IMR-90 (cell line): ENCODE measurements at regions of chr19 and their contacts with region 1.

Region 1: GRCh38 chr19:4267101-4267900 is 11.8 kb upstream of the SHD start:
- DNase-seq: peak; percentile 37
- ATAC-seq: peak; percentile 83
- H3K4me3 ChIP-seq: no peak overlapping the region
- H3K27ac ChIP-seq: no peak overlapping the region
- H3K4me1 ChIP-seq: no peaks in the 10 kb centered on the region
- H3K27me3 ChIP-seq: no peaks in the 10 kb centered on the region
- CTCF ChIP-seq: peak; percentile 61
- POLR2A ChIP-seq: no peak
- RAD21 ChIP-seq: peak; percentile 65

Region 2: DNA sequence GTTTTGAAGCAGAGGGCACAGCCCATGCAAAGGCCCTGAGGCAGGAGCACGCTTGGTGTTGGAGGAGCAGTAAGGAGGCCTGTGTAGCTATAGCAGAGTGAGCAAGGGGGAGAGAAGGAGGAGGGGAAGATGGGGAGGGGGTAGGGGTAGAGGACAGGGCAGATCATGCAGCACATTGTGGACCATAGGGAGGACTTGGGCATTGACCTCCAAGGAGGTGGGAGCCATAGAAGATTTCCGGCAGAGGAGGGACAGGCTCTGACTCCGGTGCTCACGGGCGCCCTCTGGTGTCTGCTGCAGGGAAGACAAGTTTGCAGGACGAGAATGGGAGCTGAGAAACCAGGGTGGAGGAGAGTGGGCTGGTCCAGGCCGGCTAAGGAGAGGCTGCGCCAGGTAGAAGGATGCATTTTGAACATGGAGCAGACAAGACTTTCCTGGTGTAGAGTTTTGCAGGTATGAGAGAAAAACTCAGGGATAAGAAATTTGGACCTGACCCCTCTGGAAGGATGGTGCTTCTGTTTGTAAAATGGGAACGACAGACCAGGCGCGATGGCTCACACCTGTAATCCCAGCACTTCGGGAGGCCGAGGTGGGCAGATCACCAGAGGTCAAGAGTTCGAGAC is 127.6 kb before region 1 on chr19:
- CTCF ChIA-PET with region 1: no interaction called
- POLR2A ChIA-PET with region 1: no interaction called
- dilution Hi-C with region 1: no loop called
- in situ Hi-C with region 1: no loop called
- intact Hi-C with region 1: no loop called
- DNase-seq: peak; percentile 31
- ATAC-seq: peak; percentile 78
- H3K4me3 ChIP-seq: no peak overlapping the region
- H3K27ac ChIP-seq: no peak overlapping the region
- H3K4me1 ChIP-seq: peaks cover 2% of the 10 kb centered on the region; the same call in 1 of the 2 replicates
- H3K27me3 ChIP-seq: no peaks in the 10 kb centered on the region
- CTCF ChIP-seq: peak; percentile 70
- POLR2A ChIP-seq: no peak
- RAD21 ChIP-seq: peak; percentile 48; the same call in 1 of the 2 replicates

Region 3: GRCh38 chr19:4352701-4353121 is 85.4 kb after region 1 on chr19:
- CTCF ChIA-PET with region 1: interaction called, 11 read pairs
- POLR2A ChIA-PET with region 1: no interaction called
- dilution Hi-C with region 1: no loop called
- in situ Hi-C with region 1: loop called (anchors 5 kb)
- intact Hi-C with region 1: loop called (anchors 1 kb)
- DNase-seq: peak; percentile 71
- ATAC-seq: peak; percentile 93
- H3K4me3 ChIP-seq: no peak overlapping the region
- H3K27ac ChIP-seq: no peak overlapping the region
- H3K4me1 ChIP-seq: no peaks in the 10 kb centered on the region
- H3K27me3 ChIP-seq: no peaks in the 10 kb centered on the region
- CTCF ChIP-seq: peak; percentile 71
- POLR2A ChIP-seq: no peak
- RAD21 ChIP-seq: peak; percentile 66